Transverse colon (tissue), 4 donors: ENCODE measurements at regions of chr4 and their contacts with region 1.

Region 1: GRCh38 chr4:67983333-67983732 is 20.0 kb upstream of the TMPRSS11A start:
- DNase-seq: no peak
- H3K4me3 ChIP-seq: no peak overlapping the region
- H3K27ac ChIP-seq: no peak overlapping the region
- H3K4me1 ChIP-seq: no peaks in the 10 kb centered on the region
- H3K27me3 ChIP-seq: no peaks in the 10 kb centered on the region
- CTCF ChIP-seq: no peak
- EP300 ChIP-seq: no peak
- POLR2A ChIP-seq: no peak

Region 2: GRCh38 chr4:67935888-67936287 is 47.4 kb before region 1 on chr4:
- in situ Hi-C with region 1: no loop called
- intact Hi-C with region 1: no loop called
- DNase-seq: no peak
- H3K4me3 ChIP-seq: no peak overlapping the region
- H3K27ac ChIP-seq: no peak overlapping the region
- H3K4me1 ChIP-seq: no peaks in the 10 kb centered on the region
- H3K27me3 ChIP-seq: no peaks in the 10 kb centered on the region
- CTCF ChIP-seq: no peak
- EP300 ChIP-seq: no peak
- POLR2A ChIP-seq: no peak

Region 3: GRCh38 chr4:68021185-68021584 is 37.9 kb after region 1 on chr4:
- in situ Hi-C with region 1: no loop called
- intact Hi-C with region 1: loop called (anchors 2 kb)
- DNase-seq: no peak
- H3K4me3 ChIP-seq: no peak overlapping the region
- H3K27ac ChIP-seq: no peak overlapping the region
- H3K4me1 ChIP-seq: no peaks in the 10 kb centered on the region
- H3K27me3 ChIP-seq: no peaks in the 10 kb centered on the region
- CTCF ChIP-seq: no peak
- EP300 ChIP-seq: no peak
- POLR2A ChIP-seq: no peak